ENCODE measurements at regions of chr2 and their contacts with region 1.

Region 1: GRCh38 chr2:191231995-191232394 is 13.2 kb upstream of the MYO1B start:
- DNase-seq: no peak
- H3K4me3 ChIP-seq: no peak overlapping the region
- CTCF ChIP-seq: peak; percentile 47

Region 2: DNA sequence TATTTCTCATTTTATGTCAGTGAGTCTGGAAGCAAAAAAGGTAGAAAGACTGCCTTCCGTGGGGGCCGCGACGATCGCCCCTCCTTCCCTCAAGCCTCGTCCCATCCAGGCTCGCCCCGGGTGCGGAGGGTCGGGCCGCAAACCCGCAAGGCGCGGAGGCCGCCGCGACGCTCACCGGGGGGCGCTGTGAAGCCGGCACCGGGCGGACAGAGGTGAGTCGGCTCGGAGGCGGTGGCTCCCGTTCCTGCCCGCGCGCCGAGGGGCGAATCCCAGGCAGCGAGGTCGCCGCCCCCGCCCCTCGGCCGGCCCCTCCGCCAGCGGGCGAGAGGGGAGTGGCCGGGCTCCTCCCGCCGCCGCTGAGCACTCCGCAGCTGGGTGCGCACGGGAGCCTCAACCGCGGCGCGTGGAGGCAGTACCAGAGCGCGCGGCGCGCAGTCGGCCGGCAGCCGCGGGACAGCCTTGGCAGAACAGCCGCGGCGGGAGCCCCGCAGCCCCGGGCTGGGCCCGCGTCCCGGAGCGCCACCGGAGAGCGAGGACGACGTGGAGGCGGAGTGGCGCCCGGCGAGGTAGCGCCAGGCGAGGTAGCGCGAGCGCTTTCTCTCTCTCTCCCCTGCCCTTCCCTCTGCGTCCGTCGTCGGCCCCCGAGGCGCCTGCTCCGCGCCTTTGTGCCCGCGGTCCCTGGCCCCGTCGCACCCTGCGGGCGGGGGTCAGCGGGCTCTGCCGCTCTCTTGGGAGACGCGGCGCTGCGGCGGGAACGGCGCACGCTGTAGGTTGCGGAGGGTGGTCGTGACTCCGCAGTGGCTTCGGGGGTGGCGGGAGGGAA is 13.3 kb after region 1 on chr2 and contains the start of gene MYO1B:
- CTCF ChIA-PET with region 1: interaction called, 15 read pairs
- POLR2A ChIA-PET with region 1: interaction called, 4 read pairs
- DNase-seq: no peak
- H3K4me3 ChIP-seq: peak within 1 kb of the TSS; percentile 93
- CTCF ChIP-seq: peak; percentile 68

Region 3: DNA sequence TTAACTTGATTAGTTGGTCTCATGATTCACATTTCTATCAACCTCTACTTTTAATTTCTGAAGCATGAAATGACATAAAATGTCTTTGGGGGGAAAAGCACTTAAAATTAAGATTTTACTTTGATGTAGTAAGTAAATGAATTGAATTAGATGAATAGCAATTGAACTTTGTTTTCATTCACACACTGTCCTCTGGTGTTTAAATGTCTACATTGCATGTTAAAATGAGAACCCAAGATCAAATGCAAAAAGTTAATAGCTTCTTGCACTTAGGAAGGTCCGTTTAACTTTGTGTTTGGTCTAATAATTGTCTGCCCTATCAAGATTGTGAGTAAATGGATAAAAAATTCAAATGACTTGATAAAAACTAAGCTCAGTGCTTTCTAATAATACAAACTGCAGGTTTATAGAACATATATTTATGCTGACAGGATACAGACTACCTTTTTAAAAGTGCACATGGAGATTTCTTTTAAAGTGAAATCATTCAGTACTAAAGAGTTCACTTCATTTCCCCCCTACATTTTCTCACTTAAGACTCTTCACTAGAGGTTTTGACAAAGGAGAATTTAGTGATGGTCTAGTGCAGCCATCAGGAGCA is 289.7 kb after region 1 on chr2:
- CTCF ChIA-PET with region 1: interaction called, 16 read pairs
- POLR2A ChIA-PET with region 1: no interaction called
- DNase-seq: no peak
- H3K4me3 ChIP-seq: no peak overlapping the region
- CTCF ChIP-seq: peak; percentile 47

Measured in AG04449 (cell line).